Caco-2 (cell line): ENCODE measurements at regions of chr13 and their contacts with region 1.

Region 1: GRCh38 chr13:79679334-79679733 is 198.4 kb downstream of the NDFIP2 start:
- DNase-seq: peak; percentile 78 to 80
- H3K4me3 ChIP-seq: no peak overlapping the region
- H3K4me3 Mint-ChIP-seq: no peak overlapping the region
- H3K27ac Mint-ChIP-seq: no peak overlapping the region
- H3K4me1 ChIP-seq: 0 out of 2 replicates have a peak, but pooled peaks cover 15% of the 10 kb centered on the region
- H3K4me1 Mint-ChIP-seq: peaks cover 29% of the 10 kb centered on the region
- H3K27me3 ChIP-seq: no peaks in the 10 kb centered on the region
- H3K27me3 Mint-ChIP-seq: no peaks in the 10 kb centered on the region
- CTCF ChIP-seq: peak; percentile 87 to 89

Region 2: DNA sequence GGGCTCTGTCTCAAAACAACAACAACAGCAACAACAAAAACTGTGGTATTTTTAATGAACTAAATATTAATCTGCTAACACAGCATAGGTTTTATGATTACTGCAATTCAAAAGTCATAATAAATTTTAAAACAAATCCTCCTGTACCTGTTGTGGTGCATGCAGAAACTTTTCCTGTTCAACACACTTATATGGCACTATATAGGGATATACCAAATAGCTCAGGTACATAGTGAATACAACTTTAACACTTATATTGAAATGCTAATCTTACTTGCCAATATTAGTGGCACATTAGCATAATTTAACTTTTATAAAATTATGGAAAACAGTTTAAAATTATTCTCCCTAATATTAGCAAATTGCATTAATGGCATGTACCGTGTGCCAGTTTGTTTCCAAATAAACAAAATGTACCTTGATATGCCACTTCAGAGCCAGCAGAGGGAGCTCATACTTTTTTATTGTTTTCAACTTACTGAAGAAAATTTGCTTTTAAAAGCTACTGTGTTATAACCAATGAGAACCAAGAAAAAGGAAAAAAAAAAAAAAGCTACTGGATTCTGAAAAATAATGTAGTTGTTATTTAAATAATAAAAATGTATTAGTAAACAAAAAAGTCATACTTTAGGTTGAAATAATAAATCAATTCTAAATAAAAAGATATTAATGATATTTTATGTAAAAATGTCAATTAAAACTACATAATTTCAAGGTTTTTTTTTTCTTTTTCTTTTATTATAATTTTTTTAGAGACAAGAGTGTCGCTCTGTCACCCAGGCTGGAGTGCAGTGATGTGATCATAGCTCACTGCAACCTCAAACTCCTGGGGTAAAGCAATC is 255.3 kb before region 1 on chr13:
- CTCF ChIA-PET with region 1: interaction called, 12 read pairs
- POLR2A ChIA-PET with region 1: no interaction called
- intact Hi-C with region 1: loop called (anchors 5 kb)
- DNase-seq: no peak
- H3K4me3 ChIP-seq: no peak overlapping the region
- H3K4me3 Mint-ChIP-seq: no peak overlapping the region
- H3K27ac Mint-ChIP-seq: no peak overlapping the region
- H3K4me1 ChIP-seq: no peaks in the 10 kb centered on the region
- H3K4me1 Mint-ChIP-seq: no peaks in the 10 kb centered on the region
- H3K27me3 ChIP-seq: no peaks in the 10 kb centered on the region
- H3K27me3 Mint-ChIP-seq: no peaks in the 10 kb centered on the region
- CTCF ChIP-seq: peak; percentile 64 to 75

Region 3: DNA sequence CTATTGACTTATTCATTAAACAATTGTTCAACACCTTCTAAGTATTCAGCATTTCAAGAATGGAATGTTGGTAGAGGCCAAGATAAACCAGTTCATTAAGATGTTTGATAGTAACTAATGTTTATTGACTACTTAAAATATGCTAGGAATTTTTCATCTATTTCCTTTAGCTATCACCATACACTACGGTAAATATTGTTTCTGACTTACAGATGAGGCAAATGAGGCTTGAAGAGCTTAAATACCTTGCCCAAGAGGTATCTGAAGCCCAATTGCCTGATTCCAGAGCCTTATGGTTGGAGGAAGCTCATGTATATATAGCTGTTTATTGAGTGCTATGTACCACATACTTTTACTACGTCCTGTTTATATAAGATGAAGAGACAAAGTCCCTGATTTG is 87.8 kb after region 1 on chr13:
- CTCF ChIA-PET with region 1: interaction called, 8 read pairs
- POLR2A ChIA-PET with region 1: no interaction called
- intact Hi-C with region 1: loop called (anchors 2 kb)
- DNase-seq: peak; percentile 62 to 66
- H3K4me3 ChIP-seq: no peak overlapping the region
- H3K4me3 Mint-ChIP-seq: no peak overlapping the region
- H3K27ac Mint-ChIP-seq: no peak overlapping the region
- H3K4me1 ChIP-seq: peaks cover 23% of the 10 kb centered on the region
- H3K4me1 Mint-ChIP-seq: peaks cover 14% of the 10 kb centered on the region
- H3K27me3 ChIP-seq: no peaks in the 10 kb centered on the region
- H3K27me3 Mint-ChIP-seq: no peaks in the 10 kb centered on the region
- CTCF ChIP-seq: no peak

Region 4: GRCh38 chr13:80065996-80066395 is 386.7 kb after region 1 on chr13:
- CTCF ChIA-PET with region 1: no interaction called
- POLR2A ChIA-PET with region 1: no interaction called
- intact Hi-C with region 1: loop called (anchors 10 kb)
- DNase-seq: no peak
- H3K4me3 ChIP-seq: no peak overlapping the region
- H3K4me3 Mint-ChIP-seq: no peak overlapping the region
- H3K27ac Mint-ChIP-seq: no peak overlapping the region
- H3K4me1 ChIP-seq: no peaks in the 10 kb centered on the region
- H3K4me1 Mint-ChIP-seq: peaks cover 11% of the 10 kb centered on the region
- H3K27me3 ChIP-seq: no peaks in the 10 kb centered on the region
- H3K27me3 Mint-ChIP-seq: no peaks in the 10 kb centered on the region
- CTCF ChIP-seq: no peak

Region 5: DNA sequence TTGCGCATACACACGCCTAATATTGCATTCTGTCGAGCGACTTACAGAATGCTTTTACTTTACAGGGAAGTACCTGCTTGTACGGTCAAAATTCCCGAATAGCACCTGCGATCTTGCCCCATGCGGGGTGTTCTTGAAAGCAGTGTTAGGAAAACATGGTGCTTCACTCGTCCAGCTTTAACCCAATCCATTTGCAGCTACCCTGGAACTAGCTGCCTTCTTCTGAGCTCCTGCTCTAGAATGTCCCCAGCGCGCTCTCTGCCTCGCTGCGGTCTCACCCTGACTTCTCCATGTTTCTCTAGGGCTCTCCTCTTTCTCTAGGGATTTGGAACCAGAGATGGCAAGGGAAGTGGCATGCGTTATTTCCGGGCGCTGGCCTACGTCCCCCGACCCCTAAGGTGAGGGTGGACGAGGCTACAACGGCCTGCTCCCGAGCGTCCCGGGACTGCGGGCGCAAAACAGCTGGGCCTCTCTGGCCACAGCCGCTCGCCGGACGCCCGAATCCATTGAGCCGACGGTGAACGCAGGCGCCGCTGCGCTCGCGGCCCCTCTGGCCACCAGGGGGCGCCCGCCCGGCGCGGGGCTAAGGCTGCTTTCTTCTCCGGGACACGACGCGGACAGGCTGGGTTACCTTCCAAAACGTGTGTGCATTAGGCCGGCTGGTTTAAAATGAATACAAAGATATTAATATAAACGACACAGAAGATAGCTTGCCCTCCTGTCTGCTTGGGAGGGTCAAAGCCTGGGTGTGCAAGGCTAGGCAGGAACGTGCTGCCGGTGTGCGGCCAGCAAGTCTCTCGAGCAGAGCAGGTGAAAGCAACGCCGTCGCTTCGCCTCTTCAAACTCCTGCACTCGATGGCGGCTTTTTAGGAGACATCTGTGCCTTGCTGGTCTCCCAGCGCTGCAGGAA is 663.4 kb after region 1 on chr13:
- CTCF ChIA-PET with region 1: interaction called, 8 read pairs
- POLR2A ChIA-PET with region 1: no interaction called
- intact Hi-C with region 1: loop called (anchors 5 kb)
- DNase-seq: peak; percentile 82 to 95
- H3K4me3 ChIP-seq: peak overlapping the region; percentile 84
- H3K4me3 Mint-ChIP-seq: no peak overlapping the region
- H3K27ac Mint-ChIP-seq: peak overlapping the region; percentile 91
- H3K4me1 ChIP-seq: peaks cover 21% of the 10 kb centered on the region
- H3K4me1 Mint-ChIP-seq: peaks cover 7% of the 10 kb centered on the region
- H3K27me3 ChIP-seq: no peaks in the 10 kb centered on the region
- H3K27me3 Mint-ChIP-seq: no peaks in the 10 kb centered on the region
- CTCF ChIP-seq: peak; percentile 87 to 97

Region 6: GRCh38 chr13:81017513-81018152 is 1338.3 kb after region 1 on chr13:
- CTCF ChIA-PET with region 1: no interaction called
- POLR2A ChIA-PET with region 1: no interaction called
- intact Hi-C with region 1: loop called (anchors 5 kb)
- DNase-seq: peak in 1 of 2 experiments; percentile 30
- H3K4me3 ChIP-seq: no peak overlapping the region
- H3K4me3 Mint-ChIP-seq: no peak overlapping the region
- H3K27ac Mint-ChIP-seq: no peak overlapping the region
- H3K4me1 ChIP-seq: no peaks in the 10 kb centered on the region
- H3K4me1 Mint-ChIP-seq: no peaks in the 10 kb centered on the region
- H3K27me3 ChIP-seq: no peaks in the 10 kb centered on the region
- H3K27me3 Mint-ChIP-seq: no peaks in the 10 kb centered on the region
- CTCF ChIP-seq: peak; percentile 44 to 57